ENCODE measurements at regions of chr3 and their contacts with region 1.

Region 1: DNA sequence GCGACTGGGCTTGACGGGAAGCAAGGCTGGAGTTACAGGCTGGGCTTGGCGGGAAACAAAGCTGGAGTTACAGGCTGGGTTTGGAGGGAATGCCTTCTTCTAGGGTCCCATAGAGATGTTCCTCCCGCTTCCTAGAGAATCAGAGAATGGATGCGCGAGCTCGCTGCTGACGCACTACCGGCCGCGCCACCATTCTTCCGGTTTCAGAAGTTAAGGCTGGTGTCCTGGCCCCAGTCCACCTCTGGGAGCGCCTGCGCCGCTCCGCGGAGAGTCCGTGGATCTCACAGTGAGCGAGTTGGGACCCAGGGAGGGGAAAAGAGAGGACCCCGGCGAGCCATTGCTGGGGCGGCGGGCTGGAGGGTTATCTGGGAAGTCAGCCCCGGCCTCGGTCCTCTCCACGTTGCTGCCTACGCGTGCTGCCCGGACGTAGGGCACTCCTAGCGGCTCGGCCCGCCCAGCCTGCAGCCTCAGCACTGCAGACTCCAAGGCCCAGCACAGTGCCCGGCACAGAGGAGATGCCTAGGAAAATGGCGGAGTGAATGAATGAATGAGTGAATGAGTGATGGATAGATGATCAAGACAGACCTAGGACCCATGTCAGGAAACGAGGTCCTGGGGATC is at the start of gene ZNF502:
- DNase-seq: peak; percentile 77
- H3K4me3 ChIP-seq: peak within 1 kb of the TSS; percentile 51
- H3K27ac ChIP-seq: no peak within 1 kb of the TSS
- H3K4me1 ChIP-seq: no peaks in the 10 kb centered on the region
- H3K27me3 ChIP-seq: no peaks in the 10 kb centered on the region
- CTCF ChIP-seq: 0 out of 2 replicates have a peak, but pooled peaks have one; percentile 11
- total RNA-seq, gene ZNF502: 1.6 and 2.2 TPM in 2 replicates

Region 2: DNA sequence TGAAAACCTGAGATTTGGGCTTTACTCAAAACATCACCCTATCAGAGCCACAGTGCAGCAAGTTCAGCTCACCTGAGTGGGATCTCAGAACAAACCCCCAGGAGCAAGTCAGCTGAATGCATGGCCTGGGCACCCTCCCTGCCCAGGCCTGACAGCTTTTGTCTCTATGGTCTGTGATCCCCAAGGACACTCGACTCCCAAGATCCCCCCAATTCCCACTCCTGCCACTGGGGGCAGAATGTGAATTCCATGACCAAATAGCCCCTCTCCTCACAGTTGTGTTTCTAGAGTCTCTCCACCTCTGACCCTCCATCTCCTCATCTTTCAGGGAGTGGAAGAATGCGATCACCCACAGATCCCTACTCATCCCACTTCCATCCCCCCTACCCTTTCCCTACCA is 294.0 kb before region 1 on chr3:
- CTCF ChIA-PET with region 1: no interaction called
- POLR2A ChIA-PET with region 1: no interaction called
- intact Hi-C with region 1: no loop called
- DNase-seq: no peak
- H3K4me3 ChIP-seq: no peak overlapping the region
- H3K27ac ChIP-seq: no peak overlapping the region
- H3K4me1 ChIP-seq: no peaks in the 10 kb centered on the region
- H3K27me3 ChIP-seq: no peaks in the 10 kb centered on the region
- CTCF ChIP-seq: peak; percentile 24

Region 3: GRCh38 chr3:44729384-44729910 is 16.9 kb after region 1 on chr3 and contains the start of gene ZNF501:
- CTCF ChIA-PET with region 1: no interaction called
- POLR2A ChIA-PET with region 1: no interaction called
- intact Hi-C with region 1: loop called (anchors 1 kb)
- DNase-seq: peak; percentile 85
- H3K4me3 ChIP-seq: peak within 1 kb of the TSS; percentile 54
- H3K27ac ChIP-seq: peak within 1 kb of the TSS; percentile 51
- H3K4me1 ChIP-seq: no peaks in the 10 kb centered on the region
- H3K27me3 ChIP-seq: no peaks in the 10 kb centered on the region
- CTCF ChIP-seq: no peak
- total RNA-seq, gene ZNF501: 2.8 and 4.2 TPM in 2 replicates

Region 4: DNA sequence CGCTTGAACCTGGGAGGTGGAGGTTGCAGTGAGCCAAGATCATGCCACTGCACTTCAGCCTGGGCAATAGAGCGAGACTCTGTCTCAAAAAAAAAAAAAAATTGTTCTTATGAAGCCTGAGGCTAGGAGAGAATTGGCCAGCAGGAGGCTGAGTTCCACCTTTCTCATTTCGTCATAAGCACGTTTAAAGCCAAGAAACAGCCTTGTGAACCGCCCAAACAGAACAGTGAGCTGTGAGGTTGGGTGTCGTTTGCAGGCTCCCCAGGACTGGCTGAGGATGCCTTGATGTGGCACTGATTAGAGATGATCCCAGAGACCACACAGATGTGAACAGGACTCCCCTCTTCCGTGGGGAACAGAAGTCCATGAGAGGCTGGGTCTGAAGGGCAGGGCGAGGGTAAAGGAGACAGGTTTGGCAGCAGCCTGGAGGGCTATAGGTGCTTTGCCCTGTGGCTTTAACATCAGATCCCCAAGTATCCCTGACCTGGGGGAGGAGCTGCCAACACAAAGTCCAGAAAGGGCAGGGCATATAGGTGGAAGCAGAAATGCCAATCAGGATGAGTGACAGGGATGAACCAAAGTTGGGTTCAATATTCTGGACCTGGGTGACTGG is 366.5 kb after region 1 on chr3:
- CTCF ChIA-PET with region 1: no interaction called
- POLR2A ChIA-PET with region 1: no interaction called
- intact Hi-C with region 1: no loop called
- DNase-seq: no peak
- H3K4me3 ChIP-seq: no peak overlapping the region
- H3K27ac ChIP-seq: no peak overlapping the region
- H3K4me1 ChIP-seq: no peaks in the 10 kb centered on the region
- H3K27me3 ChIP-seq: no peaks in the 10 kb centered on the region
- CTCF ChIP-seq: no peak

Measured in A673 (cell line).